Naive thymus-derived CD4-positive, alpha-beta T cell (primary cell): ENCODE measurements at regions of chr5 and their contacts with region 1.

Region 1: DNA sequence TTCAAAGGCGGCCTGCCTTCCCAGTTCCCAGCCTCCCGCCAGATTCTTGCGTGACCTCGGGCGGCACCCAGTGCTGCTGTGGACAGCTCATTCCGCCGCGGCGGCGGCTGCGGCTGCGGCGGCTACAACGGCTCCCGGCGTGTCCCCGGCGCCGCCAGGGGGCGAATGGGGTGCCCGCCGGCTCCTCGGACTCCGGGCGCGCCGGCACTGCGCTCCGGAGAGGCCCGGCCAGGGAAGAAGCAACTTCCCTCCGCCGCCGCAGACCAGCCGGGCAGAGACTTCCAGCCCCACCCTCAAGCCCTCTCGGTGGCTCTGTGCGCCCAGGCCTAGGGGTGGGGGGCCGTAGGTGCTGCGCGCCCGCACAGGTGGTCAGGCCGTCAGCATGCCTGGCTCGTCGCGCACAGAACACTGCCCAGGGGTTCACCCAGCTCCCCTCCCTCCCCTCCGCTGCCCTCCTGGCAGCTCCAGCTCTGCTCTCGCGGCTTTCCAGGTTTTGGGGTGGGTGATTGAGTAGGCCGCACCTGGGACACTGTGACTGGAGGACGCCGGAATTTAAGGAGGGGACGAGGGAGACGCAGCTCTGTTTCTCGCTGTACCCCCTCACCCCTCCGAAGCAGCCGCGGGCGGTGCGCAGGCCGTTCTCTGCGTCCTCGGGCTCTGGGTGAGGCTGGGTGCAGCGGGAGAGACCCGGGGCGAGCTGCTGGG is 20.2 kb downstream of the IGIP start:
- DNase-seq: peak in 8 of 9 donors; percentile 25 to 69 (median 42)
- ATAC-seq: peak; percentile 86
- H3K4me3 ChIP-seq: peak overlapping the region; percentile 27
- H3K4me3 Mint-ChIP-seq: peak overlapping the region in 9 of 10 donors; percentile 16 to 81 (median 72)
- H3K27ac ChIP-seq: no peak overlapping the region
- H3K27ac Mint-ChIP-seq: no peak overlapping the region
- H3K4me1 ChIP-seq: peaks cover 6 to 9% of the 10 kb centered on the region in 2 donors
- H3K4me1 Mint-ChIP-seq: peaks cover 14 to 29% (median 25%) of the 10 kb centered on the region in 7 donors
- H3K27me3 ChIP-seq: peaks cover 0 to 6% of the 10 kb centered on the region in 2 donors
- H3K27me3 Mint-ChIP-seq: peaks cover 9 to 48% (median 21%) of the 10 kb centered on the region in 5 donors

Region 2: GRCh38 chr5:140073296-140073695 is 72.7 kb before region 1 on chr5:
- CTCF ChIA-PET with region 1: interaction called, 109 read pairs
- POLR2A ChIA-PET with region 1: interaction called, 3 read pairs
- intact Hi-C with region 1: loop called (anchors 1 kb)
- DNase-seq: peak in 6 of 9 donors; percentile 25 to 54 (median 44)
- ATAC-seq: no peak
- H3K4me3 ChIP-seq: no peak overlapping the region
- H3K4me3 Mint-ChIP-seq: no peak overlapping the region
- H3K27ac ChIP-seq: no peak overlapping the region
- H3K27ac Mint-ChIP-seq: no peak overlapping the region
- H3K4me1 ChIP-seq: no peaks in the 10 kb centered on the region
- H3K4me1 Mint-ChIP-seq: no peaks in the 10 kb centered on the region
- H3K27me3 ChIP-seq: no peaks in the 10 kb centered on the region
- H3K27me3 Mint-ChIP-seq: peaks cover 12 to 50% (median 24%) of the 10 kb centered on the region in 5 donors

Region 3: GRCh38 chr5:140131967-140132409 is 14.0 kb before region 1 on chr5:
- CTCF ChIA-PET with region 1: interaction called, 8 read pairs
- POLR2A ChIA-PET with region 1: interaction called, 6 read pairs
- intact Hi-C with region 1: loop called in 1 of 2 experiments (anchors 1 kb)
- DNase-seq: peak in 2 of 9 donors; percentile 18 to 36
- ATAC-seq: peak; percentile 85
- H3K4me3 ChIP-seq: no peak overlapping the region
- H3K4me3 Mint-ChIP-seq: peak overlapping the region in 6 of 10 donors; percentile 18 to 59 (median 45)
- H3K27ac ChIP-seq: no peak overlapping the region
- H3K27ac Mint-ChIP-seq: peak overlapping the region in 5 of 9 donors; percentile 0 to 62 (median 40)
- H3K4me1 ChIP-seq: peaks cover 8 to 14% of the 10 kb centered on the region in 2 donors
- H3K4me1 Mint-ChIP-seq: peaks cover 30 to 69% (median 53%) of the 10 kb centered on the region in 7 donors
- H3K27me3 ChIP-seq: no peaks in the 10 kb centered on the region
- H3K27me3 Mint-ChIP-seq: peaks cover 0 to 5% (median 0%) of the 10 kb centered on the region in 5 donors

Region 4: GRCh38 chr5:140372971-140373487 is 227.1 kb after region 1 on chr5:
- CTCF ChIA-PET with region 1: no interaction called
- POLR2A ChIA-PET with region 1: no interaction called
- intact Hi-C with region 1: no loop called
- DNase-seq: peak in 6 of 9 donors; percentile 22 to 47 (median 36)
- ATAC-seq: peak; percentile 76
- H3K4me3 ChIP-seq: no peak overlapping the region
- H3K4me3 Mint-ChIP-seq: no peak overlapping the region
- H3K27ac ChIP-seq: no peak overlapping the region
- H3K27ac Mint-ChIP-seq: peak overlapping the region in 1 of 9 donors; percentile 4
- H3K4me1 ChIP-seq: no peaks in the 10 kb centered on the region
- H3K4me1 Mint-ChIP-seq: peaks cover 0 to 8% (median 4%) of the 10 kb centered on the region in 7 donors
- H3K27me3 ChIP-seq: no peaks in the 10 kb centered on the region
- H3K27me3 Mint-ChIP-seq: no peaks in the 10 kb centered on the region